ENCODE measurements at regions of chr6 and their contacts with region 1.

Region 1: DNA sequence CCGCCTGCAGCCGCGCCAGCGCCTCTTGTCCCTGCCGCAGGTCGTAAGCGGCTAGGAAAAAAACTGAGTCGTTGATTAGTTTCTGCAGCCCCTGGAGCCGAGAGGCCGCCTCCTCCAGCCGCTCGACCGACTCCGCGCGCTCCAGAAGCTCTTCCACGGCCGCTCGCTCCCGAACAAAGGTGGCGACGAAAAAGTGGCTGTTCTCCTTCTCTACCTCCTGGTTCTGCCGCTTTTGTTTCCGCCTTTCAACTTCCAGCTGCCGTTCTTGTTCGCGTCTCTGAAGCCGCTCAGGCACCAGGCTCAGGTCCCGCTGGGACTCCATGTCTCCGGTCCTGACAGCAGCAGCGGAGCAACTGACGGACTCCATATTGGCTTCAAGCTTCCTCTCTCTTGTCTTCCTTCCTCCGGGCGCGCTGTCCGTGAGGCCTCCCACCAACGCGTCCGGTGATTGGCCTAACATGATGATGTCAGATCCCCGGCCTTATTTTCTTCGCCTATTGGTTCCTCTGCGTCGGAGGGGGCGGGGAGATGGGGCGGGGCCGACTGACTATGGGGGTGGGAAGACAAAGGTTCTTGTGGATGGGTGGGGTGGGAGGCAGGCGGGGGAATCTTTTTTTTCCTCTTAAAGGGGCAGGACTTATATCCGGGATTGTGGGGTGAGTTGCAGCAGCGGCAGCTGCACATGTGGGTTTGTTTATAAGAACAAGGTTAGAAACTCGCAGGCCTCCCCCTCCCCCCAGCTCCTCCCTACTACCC is at the start of gene TBCC:
- DNase-seq: peak; percentile 96
- H3K4me3 Mint-ChIP-seq: peak within 1 kb of the TSS; percentile 96
- H3K27ac Mint-ChIP-seq: peak within 1 kb of the TSS; percentile 100
- H3K4me1 Mint-ChIP-seq: peaks cover 34% of the 10 kb centered on the region
- H3K27me3 Mint-ChIP-seq: no peaks in the 10 kb centered on the region
- total RNA-seq, gene TBCC: 33.7 to 34.9 TPM

Region 2: DNA sequence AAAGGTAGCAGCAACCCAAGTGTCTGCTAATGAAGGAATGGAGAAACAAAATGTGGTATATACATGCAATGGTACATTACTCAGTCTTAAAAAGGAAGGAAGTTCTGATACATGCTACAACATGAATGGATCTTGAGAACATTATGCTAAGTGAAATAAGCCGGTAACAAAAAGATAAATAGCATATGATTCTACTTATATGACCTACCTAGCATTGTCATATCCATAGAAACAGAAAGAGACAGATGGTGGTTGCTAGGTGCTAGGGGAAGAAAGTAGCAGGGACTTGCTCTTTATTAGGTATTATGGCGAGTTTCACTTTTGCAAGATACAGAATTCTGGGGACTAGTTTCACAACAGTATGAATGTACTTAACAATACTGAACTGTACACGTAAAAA is 135.5 kb before region 1 on chr6:
- CTCF ChIA-PET with region 1: no interaction called
- POLR2A ChIA-PET with region 1: no interaction called
- DNase-seq: no peak
- H3K4me3 Mint-ChIP-seq: no peak overlapping the region
- H3K27ac Mint-ChIP-seq: no peak overlapping the region
- H3K4me1 Mint-ChIP-seq: peaks cover 15% of the 10 kb centered on the region
- H3K27me3 Mint-ChIP-seq: no peaks in the 10 kb centered on the region

Region 3: GRCh38 chr6:42692137-42692911 is 53.6 kb before region 1 on chr6:
- CTCF ChIA-PET with region 1: no interaction called
- POLR2A ChIA-PET with region 1: interaction called, 13 read pairs
- DNase-seq: no peak
- H3K4me3 Mint-ChIP-seq: no peak overlapping the region
- H3K27ac Mint-ChIP-seq: peak overlapping the region; percentile 29
- H3K4me1 Mint-ChIP-seq: peaks cover 35% of the 10 kb centered on the region
- H3K27me3 Mint-ChIP-seq: no peaks in the 10 kb centered on the region

Region 4: GRCh38 chr6:42756722-42757121 is 10.8 kb after region 1 on chr6:
- CTCF ChIA-PET with region 1: interaction called, 3 read pairs
- POLR2A ChIA-PET with region 1: interaction called, 19 read pairs
- DNase-seq: no peak
- H3K4me3 Mint-ChIP-seq: no peak overlapping the region
- H3K27ac Mint-ChIP-seq: no peak overlapping the region
- H3K4me1 Mint-ChIP-seq: no peaks in the 10 kb centered on the region
- H3K27me3 Mint-ChIP-seq: no peaks in the 10 kb centered on the region

Region 5: DNA sequence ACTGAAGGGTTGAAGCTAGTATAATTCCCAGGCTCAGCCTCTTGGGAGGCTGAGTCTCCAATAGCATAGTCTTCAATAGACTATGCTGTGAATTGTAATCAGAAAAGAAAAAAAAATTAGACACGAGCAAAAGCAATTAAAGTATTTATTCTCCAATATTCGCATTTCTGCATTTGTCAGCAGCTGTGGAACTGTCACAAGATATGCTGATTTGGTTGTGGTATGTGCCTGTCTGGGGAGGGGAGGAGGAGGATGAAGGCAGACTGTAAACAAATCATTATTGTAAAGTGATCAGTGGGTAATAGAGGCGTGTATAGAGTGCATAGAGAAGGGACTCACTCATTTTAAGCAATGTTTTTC is 25.8 kb after region 1 on chr6:
- CTCF ChIA-PET with region 1: interaction called, 15 read pairs
- POLR2A ChIA-PET with region 1: interaction called, 658 read pairs
- DNase-seq: peak; percentile 43
- H3K4me3 Mint-ChIP-seq: peak overlapping the region; percentile 62
- H3K27ac Mint-ChIP-seq: peak overlapping the region; percentile 100
- H3K4me1 Mint-ChIP-seq: peaks cover 64% of the 10 kb centered on the region
- H3K27me3 Mint-ChIP-seq: no peaks in the 10 kb centered on the region

Region 6: GRCh38 chr6:42790549-42791181 is 44.8 kb after region 1 on chr6:
- CTCF ChIA-PET with region 1: interaction called, 4 read pairs
- POLR2A ChIA-PET with region 1: interaction called, 658 read pairs
- DNase-seq: no peak
- H3K4me3 Mint-ChIP-seq: no peak overlapping the region
- H3K27ac Mint-ChIP-seq: no peak overlapping the region
- H3K4me1 Mint-ChIP-seq: peaks cover 24% of the 10 kb centered on the region
- H3K27me3 Mint-ChIP-seq: no peaks in the 10 kb centered on the region

Region 7: DNA sequence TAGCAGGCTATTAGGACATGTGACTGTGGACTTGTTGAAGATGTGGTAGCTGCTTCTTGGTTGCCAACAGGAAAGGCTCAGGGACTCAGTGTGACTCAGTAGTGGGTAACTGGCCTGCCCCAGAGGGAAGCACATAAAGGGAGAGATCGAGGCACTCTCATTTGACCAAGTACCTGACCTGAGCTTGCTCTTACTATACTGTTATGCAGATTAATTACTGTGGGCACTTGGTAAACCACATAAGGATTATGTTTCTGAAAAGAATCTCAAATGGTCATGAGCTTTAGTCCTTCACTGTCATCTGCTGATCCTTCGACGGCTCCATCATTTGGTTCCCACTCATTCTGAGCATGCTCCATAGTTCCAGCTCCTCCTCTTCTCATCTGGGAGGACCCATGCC is 85.4 kb after region 1 on chr6:
- CTCF ChIA-PET with region 1: no interaction called
- POLR2A ChIA-PET with region 1: interaction called, 12 read pairs
- DNase-seq: no peak
- H3K4me3 Mint-ChIP-seq: no peak overlapping the region
- H3K27ac Mint-ChIP-seq: no peak overlapping the region
- H3K4me1 Mint-ChIP-seq: no peaks in the 10 kb centered on the region
- H3K27me3 Mint-ChIP-seq: no peaks in the 10 kb centered on the region

Region 8: DNA sequence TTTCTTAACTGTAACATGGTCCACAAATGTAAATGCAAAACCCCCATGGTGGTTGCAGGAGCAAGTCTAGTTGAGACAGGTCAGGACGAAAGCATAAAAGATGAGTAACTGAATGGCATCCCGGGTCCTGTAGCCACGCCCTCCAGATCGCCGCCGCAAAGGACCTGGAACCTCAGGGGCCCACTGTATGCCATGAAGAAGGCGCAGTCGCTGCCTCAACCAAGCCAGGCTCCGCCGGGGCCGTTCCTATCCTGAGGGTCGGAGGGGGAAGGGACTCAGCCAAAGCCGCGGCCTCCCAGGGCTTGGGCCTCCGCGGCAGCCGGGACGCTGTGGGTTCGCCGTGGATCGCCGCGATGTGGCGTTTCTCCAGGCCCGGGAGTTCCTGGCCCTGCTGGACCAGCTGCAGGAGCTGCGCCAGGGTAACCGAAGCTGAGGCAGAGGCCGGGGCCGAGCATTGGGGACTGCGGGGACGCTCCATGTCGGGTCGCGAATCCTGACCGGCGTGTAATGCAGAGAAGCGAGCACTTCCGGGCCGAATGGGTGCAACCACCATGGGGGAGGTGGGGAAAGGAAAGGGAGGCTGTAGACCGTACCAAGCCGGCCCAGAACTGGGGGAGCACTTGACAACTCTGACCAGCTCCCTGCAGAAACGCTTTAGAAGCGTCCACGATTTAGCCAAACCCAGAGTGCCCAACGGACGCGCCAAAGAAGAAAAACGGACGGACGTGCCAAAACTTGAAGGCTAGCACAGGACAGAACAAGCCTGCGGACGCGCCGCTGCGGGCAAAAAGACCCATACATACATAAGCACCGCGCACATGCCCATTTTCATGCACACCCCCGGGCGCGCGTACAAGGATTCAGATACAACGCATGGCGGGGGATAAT is 144.7 kb after region 1 on chr6:
- CTCF ChIA-PET with region 1: interaction called, 3 read pairs
- POLR2A ChIA-PET with region 1: interaction called, 29 read pairs
- DNase-seq: peak; percentile 93
- H3K4me3 Mint-ChIP-seq: peak overlapping the region; percentile 87
- H3K27ac Mint-ChIP-seq: peak overlapping the region; percentile 84
- H3K4me1 Mint-ChIP-seq: peaks cover 23% of the 10 kb centered on the region
- H3K27me3 Mint-ChIP-seq: no peaks in the 10 kb centered on the region

Region 9: DNA sequence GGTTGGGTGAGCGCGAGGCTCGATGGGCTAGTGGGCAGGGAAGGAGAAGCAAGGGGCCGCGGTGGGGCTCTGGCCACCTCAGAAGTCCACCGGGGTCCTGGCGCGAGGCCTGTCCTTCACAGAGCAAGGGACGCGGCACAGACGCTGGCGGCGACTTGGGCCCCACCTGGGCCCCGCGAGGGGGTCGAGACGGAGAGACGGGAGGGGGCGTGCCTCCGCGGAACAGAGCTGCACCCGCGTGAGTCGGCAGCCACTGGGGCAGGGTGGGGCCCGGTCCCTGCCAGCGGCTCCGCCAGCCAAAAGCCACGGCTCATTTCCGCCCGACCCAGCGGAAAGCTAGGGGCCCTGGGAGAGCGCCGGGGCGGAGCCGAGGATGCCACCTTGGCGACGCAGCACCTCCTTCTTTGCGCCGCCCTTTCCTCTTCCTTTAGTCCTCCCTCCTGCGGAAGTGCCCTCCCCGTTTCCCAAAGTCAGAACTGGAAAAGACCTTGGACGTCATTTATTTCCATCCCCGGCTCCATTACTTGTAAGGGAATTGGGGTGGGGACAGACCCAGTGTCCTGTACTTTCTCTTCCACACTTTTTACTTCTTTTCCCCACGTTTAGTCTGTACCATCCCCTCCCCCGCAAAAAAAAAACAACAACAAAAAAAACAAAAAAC is 307.8 kb after region 1 on chr6 and contains the start of gene CUL7:
- CTCF ChIA-PET with region 1: no interaction called
- POLR2A ChIA-PET with region 1: no interaction called
- DNase-seq: peak; percentile 95
- H3K4me3 Mint-ChIP-seq: peak within 1 kb of the TSS; percentile 96
- H3K27ac Mint-ChIP-seq: peak within 1 kb of the TSS; percentile 93
- H3K4me1 Mint-ChIP-seq: peaks cover 54% of the 10 kb centered on the region
- H3K27me3 Mint-ChIP-seq: no peaks in the 10 kb centered on the region
- total RNA-seq, gene CUL7: 12.7 to 13.0 TPM

Measured in activated CD4-positive, alpha-beta memory T cell treated with anti-CD3 and anti-CD28 coated beads, Interleukin-2, amount 10 ng/mL, durations not matched to agents 7 days and 5 days (primary cell).